ENCODE measurements at regions of chr5 and their contacts with region 1.

Region 1: DNA sequence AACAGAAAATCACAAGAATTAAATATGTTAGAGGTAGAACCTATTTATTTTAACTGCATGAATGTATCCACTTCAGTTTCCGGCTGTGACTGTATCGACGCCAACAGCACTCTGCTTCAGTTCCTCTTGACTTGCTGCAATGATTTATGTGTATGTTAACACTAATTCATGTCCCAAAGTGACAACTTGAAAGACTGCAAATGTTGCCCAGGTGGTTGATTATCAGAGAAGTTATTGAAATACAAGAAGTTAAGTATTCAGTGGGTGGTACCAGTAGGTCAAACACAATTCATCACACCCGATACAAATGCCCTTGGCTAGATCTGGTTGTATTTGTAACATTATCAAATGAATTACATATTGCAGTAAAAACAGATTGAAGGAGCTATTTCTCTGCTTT is 622.7 kb upstream of the CDH18 start:
- DNase-seq: no peak
- H3K4me3 Mint-ChIP-seq: no peak overlapping the region
- H3K27ac Mint-ChIP-seq: no peak overlapping the region
- H3K4me1 Mint-ChIP-seq: no peaks in the 10 kb centered on the region
- H3K27me3 Mint-ChIP-seq: no peaks in the 10 kb centered on the region

Region 2: GRCh38 chr5:19564036-19564435 is 1046.6 kb before region 1 on chr5:
- CTCF ChIA-PET with region 1: no interaction called
- intact Hi-C with region 1: loop called (anchors 10 kb)
- DNase-seq: no peak
- H3K4me3 Mint-ChIP-seq: no peak overlapping the region
- H3K27ac Mint-ChIP-seq: no peak overlapping the region
- H3K4me1 Mint-ChIP-seq: no peaks in the 10 kb centered on the region
- H3K27me3 Mint-ChIP-seq: no peaks in the 10 kb centered on the region

Region 3: GRCh38 chr5:20570486-20570885 is 40.2 kb before region 1 on chr5:
- CTCF ChIA-PET with region 1: no interaction called
- intact Hi-C with region 1: no loop called
- DNase-seq: no peak
- H3K4me3 Mint-ChIP-seq: no peak overlapping the region
- H3K27ac Mint-ChIP-seq: no peak overlapping the region
- H3K4me1 Mint-ChIP-seq: no peaks in the 10 kb centered on the region
- H3K27me3 Mint-ChIP-seq: no peaks in the 10 kb centered on the region

Region 4: GRCh38 chr5:20636686-20637085 is 26.0 kb after region 1 on chr5:
- CTCF ChIA-PET with region 1: no interaction called
- intact Hi-C with region 1: no loop called
- DNase-seq: no peak
- H3K4me3 Mint-ChIP-seq: no peak overlapping the region
- H3K27ac Mint-ChIP-seq: no peak overlapping the region
- H3K4me1 Mint-ChIP-seq: no peaks in the 10 kb centered on the region
- H3K27me3 Mint-ChIP-seq: no peaks in the 10 kb centered on the region

Measured in activated naive CD4-positive, alpha-beta T cell treated with anti-CD3 and anti-CD28 coated beads for 36 hours (primary cell).